A549 (cell line): ENCODE measurements at regions of chr2 and their contacts with region 1.

Region 1: DNA sequence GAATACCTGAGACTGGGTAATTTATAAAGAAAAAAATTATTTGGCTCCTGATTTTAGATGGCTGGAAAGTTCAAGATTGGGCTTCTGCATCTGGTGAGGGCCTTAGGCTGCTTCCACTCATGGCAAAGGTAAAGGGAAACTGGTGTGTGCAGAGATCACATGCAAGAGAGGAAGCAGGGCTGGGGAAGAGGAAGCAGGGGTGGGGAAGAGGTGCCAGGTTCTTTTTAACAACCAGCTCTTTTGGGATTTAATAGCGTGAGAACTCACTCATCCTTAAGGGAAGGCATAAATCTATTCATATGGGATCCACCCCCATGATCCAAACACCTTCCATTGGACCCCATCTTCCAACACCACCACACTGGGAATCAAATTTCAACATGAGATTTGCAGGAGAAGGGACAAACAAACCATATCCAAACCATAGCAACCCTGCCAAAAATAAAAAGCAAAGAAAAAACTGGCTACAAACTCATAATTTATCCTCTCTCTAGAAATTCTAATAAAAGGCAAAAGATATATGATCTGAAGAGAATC is 30.4 kb downstream of the PRKRA start:
- DNase-seq: no peak
- ATAC-seq: no peak
- H3K4me3 ChIP-seq: no peak overlapping the region
- H3K27ac ChIP-seq: no peak overlapping the region
- H3K4me1 ChIP-seq: peaks cover 8% of the 10 kb centered on the region
- CTCF ChIP-seq: no peak
- EP300 ChIP-seq: no peak
- POLR2A ChIP-seq: no peak
- RAD21 ChIP-seq: no peak

Region 2: GRCh38 chr2:178128836-178129630 is 291.5 kb before region 1 on chr2:
- CTCF ChIA-PET with region 1: interaction called, 60 read pairs
- POLR2A ChIA-PET with region 1: no interaction called
- DNase-seq: no peak
- ATAC-seq: no peak
- H3K4me3 ChIP-seq: no peak overlapping the region
- H3K27ac ChIP-seq: no peak overlapping the region
- H3K4me1 ChIP-seq: no peaks in the 10 kb centered on the region
- CTCF ChIP-seq: no peak
- EP300 ChIP-seq: no peak
- POLR2A ChIP-seq: no peak
- RAD21 ChIP-seq: no peak

Region 3: GRCh38 chr2:178208817-178209216 is 211.7 kb before region 1 on chr2:
- CTCF ChIA-PET with region 1: no interaction called
- POLR2A ChIA-PET with region 1: no interaction called
- DNase-seq: peak in 1 of 2 experiments; percentile 25
- ATAC-seq: no peak
- H3K4me3 ChIP-seq: no peak overlapping the region
- H3K27ac ChIP-seq: no peak overlapping the region
- H3K4me1 ChIP-seq: no peaks in the 10 kb centered on the region
- CTCF ChIP-seq: peak; percentile 28; the same call in 2 of the 3 replicates
- EP300 ChIP-seq: no peak
- POLR2A ChIP-seq: no peak
- RAD21 ChIP-seq: peak in 1 of 2 experiments; percentile 29; a peak in 1 of 5 replicates

Region 4: DNA sequence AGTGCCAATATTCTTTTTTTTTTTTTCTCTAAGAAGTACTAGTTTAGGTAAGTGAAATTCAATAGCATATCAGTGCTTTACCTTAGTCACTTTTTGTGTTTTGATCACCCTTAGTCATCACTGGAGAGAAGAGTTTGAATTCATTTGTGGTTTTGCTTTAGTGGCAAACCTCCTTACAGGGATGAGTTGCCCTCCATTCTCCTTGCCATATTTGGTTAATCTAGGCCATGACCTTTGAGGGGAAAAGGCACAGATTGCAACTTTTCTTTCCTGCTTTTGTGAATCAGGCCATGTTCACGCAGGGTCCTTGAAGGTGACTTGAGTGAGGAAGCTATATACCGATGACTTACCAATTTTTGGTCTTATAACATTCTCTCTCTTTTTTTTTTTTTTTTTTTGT is 94.1 kb after region 1 on chr2:
- CTCF ChIA-PET with region 1: no interaction called
- POLR2A ChIA-PET with region 1: no interaction called
- DNase-seq: no peak
- ATAC-seq: no peak; a peak in 1 of 6 replicates
- H3K4me3 ChIP-seq: no peak overlapping the region
- H3K27ac ChIP-seq: no peak overlapping the region
- H3K4me1 ChIP-seq: no peaks in the 10 kb centered on the region
- CTCF ChIP-seq: no peak
- EP300 ChIP-seq: no peak
- POLR2A ChIP-seq: no peak
- RAD21 ChIP-seq: no peak

Region 5: DNA sequence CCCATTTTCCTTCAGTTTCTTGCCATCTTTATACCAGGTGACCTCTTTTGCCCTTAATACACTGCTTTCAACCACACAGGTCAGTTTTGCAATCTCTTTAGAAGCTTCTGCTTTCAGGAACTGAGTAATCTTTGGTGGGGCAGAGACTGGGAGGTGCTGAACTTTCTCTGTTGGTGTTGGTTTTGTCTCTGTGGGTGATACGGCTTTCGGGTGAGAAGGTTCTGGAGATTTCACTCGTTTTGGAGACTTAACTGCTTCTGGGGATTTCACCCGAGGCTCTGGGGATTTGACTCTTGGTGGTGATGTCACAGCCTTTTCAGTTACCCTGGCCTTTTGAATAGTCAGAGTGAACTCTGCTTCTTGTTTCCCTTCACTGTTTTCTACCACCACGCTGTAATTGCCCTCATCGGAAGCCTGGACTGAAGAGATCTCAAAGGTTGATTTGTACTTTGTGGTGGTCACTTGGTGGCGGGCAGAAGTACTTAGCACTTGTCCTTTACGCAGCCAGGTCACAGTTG is 110.2 kb after region 1 on chr2:
- CTCF ChIA-PET with region 1: no interaction called
- POLR2A ChIA-PET with region 1: no interaction called
- DNase-seq: no peak
- ATAC-seq: no peak
- H3K4me3 ChIP-seq: no peak overlapping the region
- H3K27ac ChIP-seq: no peak overlapping the region
- H3K4me1 ChIP-seq: no peaks in the 10 kb centered on the region
- CTCF ChIP-seq: no peak
- EP300 ChIP-seq: no peak
- POLR2A ChIP-seq: no peak
- RAD21 ChIP-seq: no peak